PC-3 (cell line): ENCODE measurements at regions of chr1 and their contacts with region 1.

Region 1: GRCh38 chr1:92994105-92994712 is 32.9 kb upstream of the DIPK1A start:
- DNase-seq: peak; percentile 88
- ATAC-seq: peak; percentile 65
- H3K4me3 ChIP-seq: no peak overlapping the region
- H3K27ac ChIP-seq: no peak overlapping the region
- H3K4me1 ChIP-seq: peaks cover 26% of the 10 kb centered on the region
- H3K27me3 ChIP-seq: no peaks in the 10 kb centered on the region
- CTCF ChIP-seq: peak; percentile 91

Region 2: GRCh38 chr1:92858564-92859399 is 135.4 kb before region 1 on chr1:
- CTCF ChIA-PET with region 1: interaction called, 5 read pairs
- POLR2A ChIA-PET with region 1: no interaction called
- intact Hi-C with region 1: loop called (anchors 1 kb)
- DNase-seq: peak; percentile 91
- ATAC-seq: peak; percentile 80
- H3K4me3 ChIP-seq: peak overlapping the region; percentile 54
- H3K27ac ChIP-seq: no peak overlapping the region
- H3K4me1 ChIP-seq: peaks cover 6% of the 10 kb centered on the region; the same call in 1 of the 2 replicates
- H3K27me3 ChIP-seq: no peaks in the 10 kb centered on the region
- CTCF ChIP-seq: peak; percentile 99

Region 3: GRCh38 chr1:92968138-92969032 is 25.8 kb before region 1 on chr1:
- CTCF ChIA-PET with region 1: no interaction called
- POLR2A ChIA-PET with region 1: no interaction called
- intact Hi-C with region 1: loop called (anchors 1 kb)
- DNase-seq: peak; percentile 59
- ATAC-seq: peak; percentile 68
- H3K4me3 ChIP-seq: no peak overlapping the region
- H3K27ac ChIP-seq: no peak overlapping the region
- H3K4me1 ChIP-seq: no peaks in the 10 kb centered on the region
- H3K27me3 ChIP-seq: no peaks in the 10 kb centered on the region
- CTCF ChIP-seq: peak; percentile 81

Region 4: DNA sequence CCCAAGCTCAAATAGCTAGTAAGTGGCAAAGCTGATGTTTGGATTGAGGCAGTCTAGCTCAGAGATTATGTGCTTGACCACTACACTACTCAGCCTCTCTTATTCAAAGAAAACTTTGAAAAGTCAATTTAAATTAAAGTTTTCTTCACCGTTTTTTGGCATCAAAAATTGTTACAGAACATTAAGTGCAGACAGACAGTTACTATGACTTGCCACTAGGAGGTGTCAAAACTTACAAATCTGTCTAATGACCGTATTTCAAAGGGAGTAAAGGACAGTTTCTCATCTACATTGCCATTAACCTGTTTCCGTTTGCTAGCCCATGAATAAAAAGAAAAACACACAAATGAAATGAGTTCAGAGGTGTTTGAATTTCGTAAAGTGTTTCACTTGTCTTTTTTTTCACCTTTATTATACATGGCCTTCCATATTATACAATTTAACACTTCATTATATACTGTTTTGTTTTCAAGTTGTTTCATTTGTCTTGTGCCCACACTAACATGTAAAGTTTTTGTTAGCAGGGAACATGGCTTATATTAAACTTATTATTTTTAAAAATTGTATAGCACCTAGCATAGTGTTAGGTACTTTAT is 27.4 kb after region 1 on chr1:
- CTCF ChIA-PET with region 1: no interaction called
- POLR2A ChIA-PET with region 1: no interaction called
- intact Hi-C with region 1: loop called (anchors 2 kb)
- DNase-seq: peak; percentile 69
- ATAC-seq: peak; percentile 56; the same call in 1 of the 2 replicates
- H3K4me3 ChIP-seq: no peak overlapping the region
- H3K27ac ChIP-seq: no peak overlapping the region
- H3K4me1 ChIP-seq: peaks cover 18% of the 10 kb centered on the region
- H3K27me3 ChIP-seq: no peaks in the 10 kb centered on the region
- CTCF ChIP-seq: peak; percentile 89

Region 5: GRCh38 chr1:93111561-93111960 is 117.4 kb after region 1 on chr1:
- CTCF ChIA-PET with region 1: no interaction called
- POLR2A ChIA-PET with region 1: no interaction called
- intact Hi-C with region 1: no loop called
- DNase-seq: peak; percentile 9
- ATAC-seq: peak; percentile 28
- H3K4me3 ChIP-seq: no peak overlapping the region
- H3K27ac ChIP-seq: no peak overlapping the region
- H3K4me1 ChIP-seq: peaks cover 31% of the 10 kb centered on the region
- H3K27me3 ChIP-seq: no peaks in the 10 kb centered on the region
- CTCF ChIP-seq: no peak

Region 6: DNA sequence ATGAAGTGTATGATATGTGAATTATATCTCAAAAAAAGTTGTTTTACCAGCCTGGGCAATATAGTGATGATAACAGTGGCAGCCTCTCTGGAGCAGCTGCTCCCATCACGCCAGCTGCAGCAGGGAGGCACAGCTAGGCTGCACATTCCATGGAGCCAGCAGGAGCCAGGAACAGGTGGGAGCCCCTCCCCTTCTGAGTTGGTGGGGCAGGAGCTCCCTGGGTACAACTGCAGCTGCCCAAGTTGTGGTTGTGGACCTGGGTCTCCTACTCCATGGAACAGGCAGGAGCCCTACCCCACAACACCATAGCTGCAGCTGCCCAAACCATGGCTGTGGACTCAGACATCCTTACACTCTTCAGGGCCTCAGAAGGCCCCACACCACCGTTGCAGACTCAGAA is 432.0 kb after region 1 on chr1:
- CTCF ChIA-PET with region 1: no interaction called
- POLR2A ChIA-PET with region 1: no interaction called
- intact Hi-C with region 1: no loop called
- DNase-seq: no peak
- ATAC-seq: no peak
- H3K4me3 ChIP-seq: no peak overlapping the region
- H3K27ac ChIP-seq: no peak overlapping the region
- H3K4me1 ChIP-seq: no peaks in the 10 kb centered on the region
- H3K27me3 ChIP-seq: no peaks in the 10 kb centered on the region
- CTCF ChIP-seq: no peak